Tibial artery (tissue), 4 donors: ENCODE measurements at regions of chr1 and their contacts with region 1.

Region 1: GRCh38 chr1:91924146-91924545 is 25.1 kb upstream of the BRDT start:
- DNase-seq: no peak
- H3K4me3 ChIP-seq: no peak overlapping the region
- H3K27ac ChIP-seq: no peak overlapping the region
- H3K4me1 ChIP-seq: peaks cover 0 to 2% (median 0%) of the 10 kb centered on the region in 4 donors
- H3K27me3 ChIP-seq: no peaks in the 10 kb centered on the region
- CTCF ChIP-seq: no peak

Region 2: GRCh38 chr1:91282695-91283420 is 641.3 kb before region 1 on chr1:
- intact Hi-C with region 1: loop called (anchors 10 kb)
- DNase-seq: peak; percentile 54 to 65
- H3K4me3 ChIP-seq: no peak overlapping the region
- H3K27ac ChIP-seq: no peak overlapping the region
- H3K4me1 ChIP-seq: no peaks in the 10 kb centered on the region
- H3K27me3 ChIP-seq: no peaks in the 10 kb centered on the region
- CTCF ChIP-seq: peak; percentile 66 to 68

Region 3: GRCh38 chr1:91513160-91513559 is 411.0 kb before region 1 on chr1:
- intact Hi-C with region 1: loop called (anchors 1 kb)
- DNase-seq: no peak
- H3K4me3 ChIP-seq: no peak overlapping the region
- H3K27ac ChIP-seq: no peak overlapping the region
- H3K4me1 ChIP-seq: no peaks in the 10 kb centered on the region
- H3K27me3 ChIP-seq: no peaks in the 10 kb centered on the region
- CTCF ChIP-seq: peak; percentile 47 to 52

Region 4: DNA sequence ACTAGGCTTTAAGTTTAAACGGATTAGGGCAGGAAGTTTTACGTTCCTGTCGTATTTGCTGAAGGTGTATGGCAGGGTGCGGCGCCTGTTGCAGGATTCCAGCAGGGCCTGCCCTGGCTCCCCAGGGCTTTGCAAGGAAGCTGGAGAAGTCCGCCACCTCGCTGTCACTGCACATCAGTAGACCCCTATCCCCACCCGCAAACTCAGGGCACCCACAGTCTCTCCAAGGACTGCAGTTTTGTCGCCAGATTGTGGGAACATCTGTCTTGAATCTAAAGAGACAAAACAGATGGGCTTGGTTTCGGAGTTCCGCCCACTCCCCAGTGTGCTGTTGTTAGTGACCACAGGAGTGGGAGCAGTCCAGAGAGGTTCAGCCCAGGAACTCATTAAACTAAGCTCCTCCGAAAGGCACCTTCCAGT is 312.6 kb before region 1 on chr1:
- intact Hi-C with region 1: no loop called
- DNase-seq: no peak
- H3K4me3 ChIP-seq: no peak overlapping the region
- H3K27ac ChIP-seq: no peak overlapping the region
- H3K4me1 ChIP-seq: no peaks in the 10 kb centered on the region
- H3K27me3 ChIP-seq: no peaks in the 10 kb centered on the region
- CTCF ChIP-seq: no peak

Region 5: GRCh38 chr1:91948501-91949355 is 24.6 kb after region 1 on chr1:
- intact Hi-C with region 1: no loop called
- DNase-seq: no peak
- H3K4me3 ChIP-seq: no peak overlapping the region
- H3K27ac ChIP-seq: no peak overlapping the region
- H3K4me1 ChIP-seq: no peaks in the 10 kb centered on the region
- H3K27me3 ChIP-seq: no peaks in the 10 kb centered on the region
- CTCF ChIP-seq: no peak

Region 6: DNA sequence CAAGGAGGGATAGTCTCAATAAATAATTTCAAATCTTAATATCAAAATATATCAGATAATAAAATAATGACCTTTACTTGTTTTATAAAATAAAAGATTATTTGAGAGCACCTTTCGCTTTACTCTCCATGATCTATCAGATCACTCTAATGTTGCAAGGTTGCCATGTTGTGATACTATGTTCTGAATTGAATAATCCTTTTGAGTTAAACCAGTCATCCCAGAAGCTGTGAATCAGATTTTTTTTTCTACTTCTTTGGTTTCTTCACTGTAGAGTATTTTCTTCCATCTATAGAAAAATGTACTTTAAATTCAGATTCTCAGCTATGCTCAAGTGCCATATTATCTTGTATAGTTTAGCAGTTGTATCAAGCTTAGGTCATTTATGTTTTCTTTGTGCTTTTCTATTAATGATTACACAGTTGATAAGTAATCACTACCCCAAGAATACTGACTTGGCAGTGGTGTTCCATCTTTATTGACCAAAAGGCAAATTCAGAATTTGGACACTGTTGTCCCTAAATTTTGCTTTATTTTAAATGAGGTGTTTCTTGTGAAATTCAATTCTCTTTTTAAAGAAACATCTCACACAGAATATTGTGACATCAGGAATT is 58.0 kb after region 1 on chr1:
- intact Hi-C with region 1: no loop called
- DNase-seq: no peak
- H3K4me3 ChIP-seq: no peak overlapping the region
- H3K27ac ChIP-seq: no peak overlapping the region
- H3K4me1 ChIP-seq: no peaks in the 10 kb centered on the region
- H3K27me3 ChIP-seq: no peaks in the 10 kb centered on the region
- CTCF ChIP-seq: no peak